ENCODE measurements at regions of chr2 and their contacts with region 1.

Region 1: DNA sequence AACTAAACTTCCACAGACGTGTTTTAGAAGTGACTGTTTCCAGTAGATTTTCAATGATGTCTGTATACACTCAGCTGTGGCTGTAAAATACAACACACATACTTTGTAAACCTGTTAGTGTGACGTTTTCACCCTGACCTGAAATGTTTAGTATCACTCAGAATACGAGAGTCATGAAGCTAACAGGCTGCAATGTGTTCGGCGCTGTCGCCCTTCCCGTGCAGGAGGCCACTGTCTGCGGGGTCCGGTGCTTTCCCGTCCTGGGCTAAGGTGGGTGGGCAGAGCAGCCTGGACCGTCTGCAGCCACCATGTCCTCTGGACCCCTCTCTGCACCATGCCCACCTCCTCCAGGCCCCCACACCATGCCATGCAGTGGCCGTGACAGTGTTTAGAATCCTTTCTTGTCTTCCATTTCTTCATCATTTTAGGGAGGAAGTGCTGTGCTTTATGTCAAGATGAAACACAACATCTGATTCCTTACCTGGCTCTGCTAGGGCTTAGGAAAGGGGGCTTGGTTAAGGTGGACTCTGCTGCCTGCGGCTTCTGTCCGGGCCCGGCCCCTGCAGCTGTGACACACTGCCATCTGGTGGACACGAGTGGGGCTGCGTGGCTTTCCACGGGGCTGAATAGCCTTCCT is 53.8 kb upstream of the RBM44 start:
- DNase-seq: peak; percentile 88
- H3K4me3 ChIP-seq: no peak overlapping the region
- H3K27ac ChIP-seq: peak overlapping the region; percentile 52 to 92 (median 77)
- H3K4me1 ChIP-seq: peaks cover 0 to 59% (median 57%) of the 10 kb centered on the region in 4 donors
- H3K27me3 ChIP-seq: no peaks in the 10 kb centered on the region
- CTCF ChIP-seq: peak; percentile 94 to 98 (median 96)
- EP300 ChIP-seq: no peak
- POLR2A ChIP-seq: no peak

Region 2: GRCh38 chr2:237122214-237122666 is 622.5 kb before region 1 on chr2:
- intact Hi-C with region 1: loop called (anchors 10 kb)
- DNase-seq: peak; percentile 87
- H3K4me3 ChIP-seq: no peak overlapping the region
- H3K27ac ChIP-seq: peak overlapping the region in 2 of 4 donors; percentile 84 to 93
- H3K4me1 ChIP-seq: peaks cover 0 to 49% (median 35%) of the 10 kb centered on the region in 4 donors
- H3K27me3 ChIP-seq: no peaks in the 10 kb centered on the region
- CTCF ChIP-seq: peak; percentile 49 to 81 (median 66)
- EP300 ChIP-seq: no peak
- POLR2A ChIP-seq: no peak

Region 3: GRCh38 chr2:237512774-237513466 is 231.8 kb before region 1 on chr2:
- intact Hi-C with region 1: loop called (anchors 2 kb)
- DNase-seq: peak; percentile 92
- H3K4me3 ChIP-seq: no peak overlapping the region
- H3K27ac ChIP-seq: no peak overlapping the region
- H3K4me1 ChIP-seq: peaks cover 0 to 17% (median 12%) of the 10 kb centered on the region in 4 donors
- H3K27me3 ChIP-seq: no peaks in the 10 kb centered on the region
- CTCF ChIP-seq: peak; percentile 88 to 89 (median 89)
- EP300 ChIP-seq: no peak
- POLR2A ChIP-seq: no peak

Region 4: GRCh38 chr2:237581751-237582746 is 162.7 kb before region 1 on chr2:
- intact Hi-C with region 1: loop called (anchors 1 kb)
- DNase-seq: peak; percentile 94
- H3K4me3 ChIP-seq: peak overlapping the region in 3 of 4 donors; percentile 11 to 28 (median 20)
- H3K27ac ChIP-seq: peak overlapping the region; percentile 39 to 73 (median 69)
- H3K4me1 ChIP-seq: peaks cover 0 to 19% (median 13%) of the 10 kb centered on the region in 4 donors
- H3K27me3 ChIP-seq: no peaks in the 10 kb centered on the region
- CTCF ChIP-seq: peak; percentile 28 to 49 (median 32)
- EP300 ChIP-seq: no peak
- POLR2A ChIP-seq: no peak

Region 5: GRCh38 chr2:237603718-237604362 is 140.9 kb before region 1 on chr2:
- intact Hi-C with region 1: loop called (anchors 5 kb)
- DNase-seq: no peak
- H3K4me3 ChIP-seq: peak overlapping the region in 1 of 4 donors; percentile 4
- H3K27ac ChIP-seq: peak overlapping the region in 2 of 4 donors; percentile 32 to 44
- H3K4me1 ChIP-seq: peaks cover 0 to 21% (median 17%) of the 10 kb centered on the region in 4 donors
- H3K27me3 ChIP-seq: no peaks in the 10 kb centered on the region
- CTCF ChIP-seq: no peak
- EP300 ChIP-seq: peak in 1 of 4 donors; percentile 18
- POLR2A ChIP-seq: no peak

Region 6: GRCh38 chr2:237627441-237628246 is 117.1 kb before region 1 on chr2 and contains the start of gene LRRFIP1:
- intact Hi-C with region 1: loop called (anchors 2 kb)
- DNase-seq: peak; percentile 72
- H3K4me3 ChIP-seq: peak within 1 kb of the TSS; percentile 47 to 93 (median 64)
- H3K27ac ChIP-seq: peak within 1 kb of the TSS; percentile 75 to 87 (median 78)
- H3K4me1 ChIP-seq: peaks cover 0 to 55% (median 24%) of the 10 kb centered on the region in 4 donors
- H3K27me3 ChIP-seq: no peaks in the 10 kb centered on the region
- CTCF ChIP-seq: no peak
- EP300 ChIP-seq: no peak
- POLR2A ChIP-seq: no peak
- total RNA-seq, gene LRRFIP1: 112 to 185 (median 136) TPM

Region 7: DNA sequence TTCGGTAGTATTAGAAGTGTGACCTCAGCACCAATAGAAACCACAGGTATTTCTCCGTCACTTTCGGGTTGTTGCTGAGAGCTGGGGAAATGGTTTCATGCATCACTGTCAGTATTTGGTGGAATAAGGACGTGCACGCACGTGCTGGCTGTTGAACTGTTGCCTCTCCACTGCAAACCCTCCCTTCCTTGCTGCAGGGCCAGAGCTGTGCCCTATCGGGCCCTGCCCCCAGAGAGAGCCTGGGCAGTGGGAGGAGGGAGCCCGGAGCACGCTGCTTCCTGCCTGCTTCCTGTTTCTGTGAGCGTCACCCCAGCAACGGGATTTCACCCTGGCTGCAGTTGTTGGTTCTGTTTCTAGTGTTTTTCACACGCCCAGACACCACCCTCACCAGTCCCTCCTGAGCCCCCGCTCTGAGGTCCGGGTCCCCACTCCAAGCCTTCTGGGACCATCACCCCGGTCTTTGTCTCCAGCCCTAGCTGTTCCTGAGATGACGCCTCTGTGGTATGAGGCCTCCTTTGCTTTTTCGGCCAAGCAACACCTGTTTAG is 69.9 kb before region 1 on chr2:
- intact Hi-C with region 1: loop called (anchors 5 kb)
- DNase-seq: peak; percentile 92
- H3K4me3 ChIP-seq: peak overlapping the region in 3 of 4 donors; percentile 14 to 33 (median 26)
- H3K27ac ChIP-seq: peak overlapping the region; percentile 66 to 87 (median 80)
- H3K4me1 ChIP-seq: peaks cover 0 to 61% (median 54%) of the 10 kb centered on the region in 4 donors
- H3K27me3 ChIP-seq: no peaks in the 10 kb centered on the region
- CTCF ChIP-seq: peak in 1 of 4 experiments; percentile 18
- EP300 ChIP-seq: peak in 1 of 4 donors; percentile 44
- POLR2A ChIP-seq: no peak